ENCODE measurements at regions of chr1 and their contacts with region 1.

Region 1: GRCh38 chr1:160777486-160778089 is 18.4 kb upstream of the LY9 start:
- DNase-seq: peak; percentile 32
- H3K4me3 Mint-ChIP-seq: no peak overlapping the region
- H3K27ac Mint-ChIP-seq: peak overlapping the region; percentile 48
- H3K4me1 Mint-ChIP-seq: peaks cover 54% of the 10 kb centered on the region
- H3K27me3 Mint-ChIP-seq: no peaks in the 10 kb centered on the region

Region 2: GRCh38 chr1:160830321-160831153 is 52.9 kb after region 1 on chr1:
- intact Hi-C with region 1: loop called (anchors 1 kb)
- DNase-seq: peak; percentile 65
- H3K4me3 Mint-ChIP-seq: no peak overlapping the region
- H3K27ac Mint-ChIP-seq: no peak overlapping the region
- H3K4me1 Mint-ChIP-seq: peaks cover 26% of the 10 kb centered on the region
- H3K27me3 Mint-ChIP-seq: peaks cover 3% of the 10 kb centered on the region

Region 3: DNA sequence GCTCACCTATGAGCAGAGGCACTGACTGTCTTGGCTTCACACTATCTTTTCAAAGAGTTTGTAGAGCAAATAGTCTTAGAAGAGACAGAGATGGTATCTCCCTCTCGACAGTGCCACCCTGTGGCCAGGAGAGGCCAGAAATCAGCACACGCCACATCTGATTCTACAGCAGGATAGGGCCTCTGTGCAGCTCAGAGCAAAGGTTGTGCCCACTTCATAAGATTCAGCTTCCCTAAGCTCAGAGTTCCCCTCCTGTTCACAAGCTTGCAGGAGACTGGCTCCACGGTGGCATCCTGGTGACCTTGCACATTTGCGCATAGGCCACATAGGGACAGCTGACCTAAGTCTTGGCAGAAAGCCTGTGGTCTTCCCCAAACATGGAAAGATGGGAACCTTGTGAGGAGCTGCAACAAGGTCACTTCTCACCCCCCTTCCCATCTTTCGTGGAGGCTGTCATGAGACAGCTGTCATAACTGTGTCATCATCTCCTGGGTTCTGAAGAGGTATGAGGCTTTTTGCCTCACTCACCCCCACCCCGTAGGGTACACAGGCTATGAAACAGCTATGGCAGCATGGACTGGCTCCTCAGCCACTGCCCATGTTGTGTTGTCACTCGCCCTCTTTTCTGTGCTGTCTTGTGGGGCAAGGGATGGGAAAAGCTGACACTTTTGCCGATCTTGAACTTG is 174.0 kb after region 1 on chr1:
- intact Hi-C with region 1: loop called (anchors 1 kb)
- DNase-seq: peak; percentile 52
- H3K4me3 Mint-ChIP-seq: no peak overlapping the region
- H3K27ac Mint-ChIP-seq: no peak overlapping the region
- H3K4me1 Mint-ChIP-seq: peaks cover 11% of the 10 kb centered on the region
- H3K27me3 Mint-ChIP-seq: peaks cover 6% of the 10 kb centered on the region

Measured in activated T-helper 1 cell treated with anti-CD3 and anti-CD28 coated beads, Interleukin-12 subunit alpha, Interleukin-12 subunit beta, Interleukin-2, Interleukin-4 antibody, amounts not matched to agents 30 ng/mL and 10 ng/mL and 1 ng/mL, durations not matched to agents 14 hours and 24 hours and 36 hours (primary cell).